ENCODE measurements at regions of chr1 and their contacts with region 1.

Region 1: GRCh38 chr1:185595835-185596667 is 138.1 kb upstream of the HMCN1 start:
- DNase-seq: peak; percentile 84
- H3K4me3 Mint-ChIP-seq: no peak overlapping the region
- H3K27ac Mint-ChIP-seq: no peak overlapping the region
- H3K4me1 Mint-ChIP-seq: no peaks in the 10 kb centered on the region
- H3K27me3 Mint-ChIP-seq: no peaks in the 10 kb centered on the region
- CTCF ChIP-seq: peak; percentile 90

Region 2: DNA sequence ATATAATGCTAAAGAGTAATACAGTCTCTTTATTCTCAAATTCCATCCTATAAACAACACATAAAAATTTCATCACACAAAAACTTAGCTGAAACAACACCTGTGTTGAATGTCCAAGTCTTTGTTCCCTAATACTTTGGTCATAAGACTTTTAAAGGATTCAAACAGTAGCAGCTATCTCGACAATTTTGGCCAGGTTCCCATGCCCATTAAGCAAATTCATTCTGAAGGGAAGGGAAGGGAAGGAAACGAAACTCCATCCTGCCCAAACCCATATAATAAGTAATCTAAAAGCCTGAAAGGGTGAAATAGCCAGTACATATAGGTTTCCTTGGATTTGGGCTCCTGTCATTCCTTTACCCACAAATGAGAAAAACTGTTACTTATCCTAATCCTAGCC is 286.5 kb before region 1 on chr1:
- CTCF ChIA-PET with region 1: interaction called, 19 read pairs
- POLR2A ChIA-PET with region 1: interaction called, 4 read pairs
- intact Hi-C with region 1: no loop called
- DNase-seq: no peak
- H3K4me3 Mint-ChIP-seq: no peak overlapping the region
- H3K27ac Mint-ChIP-seq: peak overlapping the region; percentile 67
- H3K4me1 Mint-ChIP-seq: peaks cover 34% of the 10 kb centered on the region
- H3K27me3 Mint-ChIP-seq: no peaks in the 10 kb centered on the region
- CTCF ChIP-seq: no peak

Region 3: GRCh38 chr1:185453496-185454192 is 142.4 kb before region 1 on chr1:
- CTCF ChIA-PET with region 1: no interaction called
- POLR2A ChIA-PET with region 1: no interaction called
- intact Hi-C with region 1: no loop called
- DNase-seq: peak; percentile 51
- H3K4me3 Mint-ChIP-seq: no peak overlapping the region
- H3K27ac Mint-ChIP-seq: no peak overlapping the region
- H3K4me1 Mint-ChIP-seq: no peaks in the 10 kb centered on the region
- H3K27me3 Mint-ChIP-seq: no peaks in the 10 kb centered on the region
- CTCF ChIP-seq: no peak

Region 4: GRCh38 chr1:185526344-185527307 is 69.4 kb before region 1 on chr1:
- CTCF ChIA-PET with region 1: interaction called, 19 read pairs
- POLR2A ChIA-PET with region 1: no interaction called
- intact Hi-C with region 1: loop called (anchors 5 kb)
- DNase-seq: no peak
- H3K4me3 Mint-ChIP-seq: no peak overlapping the region
- H3K27ac Mint-ChIP-seq: no peak overlapping the region
- H3K4me1 Mint-ChIP-seq: no peaks in the 10 kb centered on the region
- H3K27me3 Mint-ChIP-seq: no peaks in the 10 kb centered on the region
- CTCF ChIP-seq: no peak

Region 5: DNA sequence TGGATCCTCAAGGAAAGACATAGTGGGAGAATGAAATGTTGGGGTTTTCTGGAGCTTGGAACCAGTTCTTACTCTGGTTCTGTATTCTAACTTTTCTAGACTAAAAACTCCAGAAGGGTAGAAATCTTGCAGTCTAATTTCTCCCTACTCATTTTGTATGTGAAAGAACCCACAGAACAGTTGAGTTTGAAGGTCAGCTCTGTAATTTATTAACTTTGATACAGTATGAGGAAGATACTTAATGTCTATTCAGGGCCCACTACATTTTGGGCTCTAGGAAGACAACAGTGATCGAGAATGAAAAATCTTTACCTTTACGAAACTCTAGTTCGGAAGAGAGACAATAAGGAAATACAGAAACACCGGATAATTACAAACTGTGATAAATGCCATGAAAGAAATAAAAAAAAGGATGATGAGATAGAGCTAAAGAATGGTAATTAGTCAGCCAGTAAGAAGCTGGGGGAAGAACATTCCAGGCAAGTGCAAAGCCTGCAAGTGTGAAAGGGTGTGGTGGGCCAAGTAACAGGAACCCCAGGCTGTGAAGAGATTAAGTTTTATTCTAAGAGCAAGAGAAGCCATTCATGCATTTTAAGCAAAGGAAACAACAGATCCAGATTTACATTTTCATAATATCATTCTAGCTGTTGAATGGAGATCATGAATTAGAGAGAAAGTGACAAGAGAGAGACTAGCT is 21.8 kb before region 1 on chr1:
- CTCF ChIA-PET with region 1: interaction called, 23 read pairs
- POLR2A ChIA-PET with region 1: interaction called, 3 read pairs
- intact Hi-C with region 1: no loop called
- DNase-seq: no peak
- H3K4me3 Mint-ChIP-seq: no peak overlapping the region
- H3K27ac Mint-ChIP-seq: no peak overlapping the region
- H3K4me1 Mint-ChIP-seq: peaks cover 16% of the 10 kb centered on the region
- H3K27me3 Mint-ChIP-seq: no peaks in the 10 kb centered on the region
- CTCF ChIP-seq: no peak

Region 6: DNA sequence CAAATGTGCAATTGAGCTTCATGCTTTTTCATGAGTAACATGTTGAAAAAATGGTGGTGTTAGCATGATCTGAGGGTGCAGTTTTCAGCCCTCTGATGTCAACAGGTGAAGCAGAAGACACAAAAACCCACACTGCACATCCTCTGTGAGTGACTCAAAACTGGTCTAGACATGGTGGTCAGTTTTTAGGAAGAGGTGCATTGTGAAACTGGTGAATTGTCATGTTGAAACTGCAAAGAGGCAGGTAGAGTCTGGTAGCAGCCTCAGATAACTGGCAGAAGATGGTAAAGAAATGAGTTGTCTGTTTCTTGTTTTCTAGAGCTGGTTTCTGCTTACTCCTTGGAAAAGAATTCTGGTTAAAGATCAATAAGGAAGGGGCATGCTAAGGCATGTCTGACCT is 40.8 kb after region 1 on chr1:
- CTCF ChIA-PET with region 1: interaction called, 17 read pairs
- POLR2A ChIA-PET with region 1: no interaction called
- intact Hi-C with region 1: no loop called
- DNase-seq: peak; percentile 33
- H3K4me3 Mint-ChIP-seq: no peak overlapping the region
- H3K27ac Mint-ChIP-seq: peak overlapping the region; percentile 63
- H3K4me1 Mint-ChIP-seq: peaks cover 29% of the 10 kb centered on the region
- H3K27me3 Mint-ChIP-seq: no peaks in the 10 kb centered on the region
- CTCF ChIP-seq: no peak

Region 7: DNA sequence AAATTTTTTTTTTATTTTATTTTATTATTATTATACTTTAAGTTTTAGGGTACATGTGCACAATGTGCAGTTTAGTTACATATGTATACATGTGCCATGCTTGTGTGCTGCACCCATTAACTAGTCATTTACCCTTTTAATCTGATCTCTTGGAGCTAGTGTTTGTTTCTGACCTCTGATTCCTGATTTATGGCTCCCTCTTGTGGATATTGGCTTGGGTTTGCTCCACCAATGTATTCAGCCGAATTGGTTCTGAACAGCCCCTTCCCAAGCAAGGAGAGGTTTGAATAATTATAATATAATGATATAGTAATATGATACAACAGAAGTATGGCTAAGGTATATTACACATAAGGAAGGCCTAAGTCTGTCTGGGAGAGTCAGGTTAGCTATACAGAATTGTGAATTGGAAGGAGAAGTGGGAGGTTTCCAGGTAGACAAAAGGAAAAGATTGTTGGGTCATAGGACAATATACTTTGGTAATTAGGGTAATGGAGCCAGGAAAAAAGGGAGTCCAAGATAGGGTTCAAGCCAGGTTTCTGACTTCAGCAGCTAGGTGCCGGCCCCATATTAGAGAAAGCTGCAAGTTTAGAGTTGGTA is 85.1 kb after region 1 on chr1:
- CTCF ChIA-PET with region 1: interaction called, 43 read pairs
- POLR2A ChIA-PET with region 1: interaction called, 4 read pairs
- intact Hi-C with region 1: no loop called
- DNase-seq: peak; percentile 81
- H3K4me3 Mint-ChIP-seq: no peak overlapping the region
- H3K27ac Mint-ChIP-seq: no peak overlapping the region
- H3K4me1 Mint-ChIP-seq: no peaks in the 10 kb centered on the region
- H3K27me3 Mint-ChIP-seq: no peaks in the 10 kb centered on the region
- CTCF ChIP-seq: peak; percentile 60

Measured in MCF 10A (cell line).